ENCODE measurements at regions of chr16 and their contacts with region 1.

Region 1: GRCh38 chr16:48609652-48610029 is 339 bp downstream of the N4BP1 start:
- DNase-seq: peak; percentile 49
- H3K4me3 ChIP-seq: peak overlapping the region; percentile 89 to 94
- H3K27ac ChIP-seq: peak overlapping the region; percentile 87 to 90
- H3K4me1 ChIP-seq: peaks cover 27% of the 10 kb centered on the region
- H3K27me3 ChIP-seq: no peaks in the 10 kb centered on the region
- CTCF ChIP-seq: no peak
- POLR2A ChIP-seq: no peak

Region 2: DNA sequence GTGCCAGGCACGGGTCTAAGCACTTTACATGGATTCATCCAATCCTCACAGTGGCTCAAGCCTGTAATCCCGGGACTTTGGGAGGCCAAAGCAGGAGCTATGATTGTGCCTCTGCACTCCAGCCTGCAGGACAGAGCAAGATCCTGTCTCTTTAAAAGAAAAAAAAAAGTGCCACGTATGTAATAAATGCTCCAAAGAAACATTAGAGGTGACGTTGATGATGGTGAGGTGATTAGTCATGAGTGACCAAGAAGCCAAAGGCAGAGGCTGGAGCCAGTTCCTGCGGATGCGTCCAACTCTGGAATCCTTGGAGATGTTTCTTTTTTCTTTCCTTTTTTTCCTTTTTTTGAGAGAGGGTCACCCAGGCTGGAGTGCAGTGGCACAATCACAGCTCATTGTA is 165.1 kb before region 1 on chr16:
- intact Hi-C with region 1: no loop called
- DNase-seq: no peak
- H3K4me3 ChIP-seq: no peak overlapping the region
- H3K27ac ChIP-seq: no peak overlapping the region
- H3K4me1 ChIP-seq: no peaks in the 10 kb centered on the region
- H3K27me3 ChIP-seq: no peaks in the 10 kb centered on the region
- CTCF ChIP-seq: no peak
- POLR2A ChIP-seq: no peak

Region 3: DNA sequence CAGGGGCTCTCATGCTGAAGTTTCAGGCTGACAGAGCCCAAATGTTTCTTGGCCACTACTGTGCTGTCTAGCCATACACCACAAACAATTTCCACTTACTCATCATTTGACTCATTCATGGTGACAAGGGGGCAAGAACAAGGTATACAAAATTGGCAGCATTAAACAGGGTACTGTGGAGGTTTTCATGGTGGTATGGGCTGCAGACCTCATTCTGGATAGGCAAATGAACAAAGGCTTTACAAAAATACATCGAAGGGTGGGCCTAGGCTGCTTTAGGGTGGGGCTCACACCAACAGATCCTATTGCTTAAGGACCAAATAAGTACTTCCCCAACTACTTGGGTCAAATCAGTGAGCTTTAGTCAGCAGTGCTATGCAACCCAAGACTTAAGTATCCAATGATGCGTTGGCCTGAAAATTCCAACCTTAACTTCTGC is 52.7 kb before region 1 on chr16:
- intact Hi-C with region 1: loop called (anchors 5 kb)
- DNase-seq: no peak
- H3K4me3 ChIP-seq: no peak overlapping the region
- H3K27ac ChIP-seq: no peak overlapping the region
- H3K4me1 ChIP-seq: no peaks in the 10 kb centered on the region
- H3K27me3 ChIP-seq: no peaks in the 10 kb centered on the region
- CTCF ChIP-seq: no peak
- POLR2A ChIP-seq: no peak

Measured in prostate gland (tissue), 2 donors.